Adrenal gland (tissue), 19 donors: ENCODE measurements at regions of chr14 and their contacts with region 1.

Region 1: GRCh38 chr14:39015360-39015961 is 87.6 kb downstream of the SEC23A start:
- DNase-seq: peak in 3 of 7 donors; percentile 30 to 36 (median 33)
- H3K4me3 ChIP-seq: no peak overlapping the region
- H3K27ac ChIP-seq: no peak overlapping the region
- H3K4me1 ChIP-seq: no peaks in the 10 kb centered on the region
- H3K27me3 ChIP-seq: no peaks in the 10 kb centered on the region
- CTCF ChIP-seq: peak; percentile 55 to 84 (median 64)
- POLR2A ChIP-seq: no peak

Region 2: GRCh38 chr14:38873941-38874612 is 141.4 kb before region 1 on chr14:
- intact Hi-C with region 1: loop called in 1 of 2 experiments (anchors 5 kb)
- DNase-seq: no peak
- H3K4me3 ChIP-seq: no peak overlapping the region
- H3K27ac ChIP-seq: no peak overlapping the region
- H3K4me1 ChIP-seq: no peaks in the 10 kb centered on the region
- H3K27me3 ChIP-seq: no peaks in the 10 kb centered on the region
- CTCF ChIP-seq: no peak
- POLR2A ChIP-seq: no peak